BJ (cell line): ENCODE measurements at regions of chr4 and their contacts with region 1.

Region 1: GRCh38 chr4:37389967-37390580 is 145.5 kb downstream of the NWD2 start:
- DNase-seq: no peak
- H3K4me3 ChIP-seq: no peak overlapping the region
- H3K27me3 ChIP-seq: no peaks in the 10 kb centered on the region
- CTCF ChIP-seq: peak; percentile 70

Region 2: GRCh38 chr4:37008199-37008598 is 381.9 kb before region 1 on chr4:
- CTCF ChIA-PET with region 1: no interaction called
- POLR2A ChIA-PET with region 1: no interaction called
- DNase-seq: no peak
- H3K4me3 ChIP-seq: no peak overlapping the region
- H3K27me3 ChIP-seq: no peaks in the 10 kb centered on the region
- CTCF ChIP-seq: no peak

Region 3: GRCh38 chr4:37367901-37368300 is 22.2 kb before region 1 on chr4:
- CTCF ChIA-PET with region 1: interaction called, 10 read pairs
- POLR2A ChIA-PET with region 1: no interaction called
- DNase-seq: no peak
- H3K4me3 ChIP-seq: no peak overlapping the region
- H3K27me3 ChIP-seq: no peaks in the 10 kb centered on the region
- CTCF ChIP-seq: no peak